Right ventricle myocardium superior (tissue), 1 donor: ENCODE measurements at regions of chr17 and their contacts with region 1.

Region 1: GRCh38 chr17:82668631-82669099 is 20.4 kb upstream of the WDR45B start:
- DNase-seq: peak; percentile 76
- ATAC-seq: peak; percentile 92

Region 2: GRCh38 chr17:82767041-82767754 is 98.5 kb after region 1 on chr17:
- intact Hi-C with region 1: loop called (anchors 10 kb)
- DNase-seq: peak; percentile 35
- ATAC-seq: peak; percentile 71